Activated CD4-positive, alpha-beta memory T cell treated with anti-CD3 and anti-CD28 coated beads for 36 hours (primary cell): ENCODE measurements at regions of chr2 and their contacts with region 1.

Region 1: GRCh38 chr2:30231212-30231995 is at the start of gene LBH:
- DNase-seq: peak; percentile 94
- H3K4me3 Mint-ChIP-seq: peak within 1 kb of the TSS; percentile 84
- H3K27ac Mint-ChIP-seq: peak within 1 kb of the TSS; percentile 94
- H3K4me1 Mint-ChIP-seq: peaks cover 63% of the 10 kb centered on the region
- H3K27me3 Mint-ChIP-seq: no peaks in the 10 kb centered on the region
- total RNA-seq, gene LBH: 109 to 112 TPM

Region 2: DNA sequence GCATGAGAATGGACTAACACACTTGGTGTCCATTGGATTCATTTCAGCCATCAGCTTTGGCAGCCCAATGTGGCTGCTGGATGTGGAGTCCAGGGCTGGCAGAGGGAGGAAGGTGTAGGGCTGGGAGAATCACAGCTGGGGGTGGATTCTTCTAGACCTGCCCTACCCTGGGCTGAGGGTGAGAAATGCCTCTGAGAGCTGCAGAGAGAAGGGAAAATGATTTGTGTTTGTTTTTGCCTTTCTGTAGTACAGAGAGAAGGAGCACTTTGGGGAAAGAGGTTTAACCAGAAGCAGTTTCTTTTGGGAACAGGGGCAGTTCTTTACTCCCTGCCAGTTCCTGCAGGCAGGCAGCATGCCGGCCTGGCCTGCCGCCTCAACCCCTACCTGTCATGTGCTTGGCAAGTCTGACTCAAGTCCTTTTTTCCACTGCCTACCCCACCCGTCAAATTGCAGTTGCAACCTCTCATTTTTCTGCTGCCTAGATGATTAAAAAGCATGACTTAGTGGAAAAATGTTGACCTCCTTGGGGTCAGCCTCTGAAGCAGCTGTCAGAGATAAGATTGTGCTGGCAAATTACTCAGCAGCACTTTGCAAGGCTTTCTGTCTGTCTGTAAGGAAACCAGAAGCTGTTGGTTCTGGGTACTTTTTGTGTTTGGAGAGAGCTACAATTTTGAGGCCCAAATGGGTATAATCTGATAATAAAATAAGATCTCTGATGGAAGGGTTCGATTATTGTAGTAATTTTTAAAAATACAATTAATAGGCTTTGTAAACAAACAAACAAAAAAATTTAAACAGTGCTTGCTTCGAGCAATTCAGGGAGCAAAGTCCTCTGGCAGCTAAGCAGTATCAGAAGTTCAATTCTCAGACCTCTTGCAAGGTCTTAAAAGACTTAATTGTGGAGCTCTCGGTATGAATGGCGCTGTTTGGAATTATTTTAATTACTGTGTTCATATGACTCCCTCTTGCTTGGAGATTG is 21.6 kb after region 1 on chr2:
- CTCF ChIA-PET with region 1: interaction called, 12 read pairs
- POLR2A ChIA-PET with region 1: interaction called, 19 read pairs
- intact Hi-C with region 1: loop called (anchors 1 kb)
- DNase-seq: peak; percentile 89
- H3K4me3 Mint-ChIP-seq: peak overlapping the region; percentile 33
- H3K27ac Mint-ChIP-seq: peak overlapping the region; percentile 92
- H3K4me1 Mint-ChIP-seq: peaks cover 96% of the 10 kb centered on the region
- H3K27me3 Mint-ChIP-seq: no peaks in the 10 kb centered on the region

Region 3: DNA sequence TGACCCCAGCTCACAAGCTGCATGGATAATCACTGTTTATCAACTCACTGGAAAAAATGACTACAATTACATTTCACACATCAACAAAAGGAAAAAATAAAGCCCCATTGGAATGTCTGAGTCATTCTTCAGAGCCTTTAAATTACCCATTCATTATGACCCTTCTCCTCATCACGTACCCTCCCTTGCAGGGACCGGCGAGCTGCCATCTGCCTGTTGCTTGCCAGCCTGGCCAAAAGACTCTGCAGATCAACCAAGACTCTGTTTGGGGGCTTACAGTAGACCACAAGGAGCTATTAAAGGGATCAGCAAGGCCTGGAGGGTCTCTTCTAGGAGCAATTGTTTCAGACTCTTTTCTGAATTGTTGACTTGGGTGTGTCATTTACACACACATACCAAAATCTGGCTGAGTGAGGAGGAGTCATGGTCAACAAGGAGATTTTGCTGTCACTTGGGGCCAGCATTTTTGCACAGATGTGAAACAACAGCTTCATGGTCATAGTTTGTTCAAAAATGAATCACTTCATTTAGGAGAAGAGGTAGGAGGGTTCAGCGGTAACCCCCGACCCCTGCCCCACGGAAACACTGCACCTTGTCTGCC is 42.0 kb after region 1 on chr2:
- CTCF ChIA-PET with region 1: interaction called, 3 read pairs
- POLR2A ChIA-PET with region 1: interaction called, 114 read pairs
- intact Hi-C with region 1: no loop called
- DNase-seq: peak; percentile 64
- H3K4me3 Mint-ChIP-seq: peak overlapping the region; percentile 43
- H3K27ac Mint-ChIP-seq: peak overlapping the region; percentile 86
- H3K4me1 Mint-ChIP-seq: peaks cover 51% of the 10 kb centered on the region
- H3K27me3 Mint-ChIP-seq: no peaks in the 10 kb centered on the region

Region 4: DNA sequence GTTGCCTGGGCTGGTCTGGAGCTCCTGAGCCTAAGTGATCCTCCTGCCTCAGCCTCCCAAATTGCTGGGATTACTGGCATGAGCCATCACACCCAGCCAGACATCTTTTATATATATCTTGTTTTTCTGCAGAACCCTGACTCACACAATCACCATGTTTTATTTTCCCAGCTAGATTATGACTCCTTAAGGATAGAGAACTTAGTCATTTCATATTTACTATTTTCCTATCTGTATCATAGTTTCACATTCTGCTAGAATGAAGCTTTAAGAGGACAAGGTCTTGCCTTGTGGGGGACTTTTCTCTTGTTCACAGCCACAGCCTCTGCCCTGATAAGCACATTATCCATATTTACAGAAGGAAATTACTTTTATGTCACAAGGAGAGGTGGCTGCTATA is 73.8 kb after region 1 on chr2:
- CTCF ChIA-PET with region 1: interaction called, 3 read pairs
- POLR2A ChIA-PET with region 1: interaction called, 12 read pairs
- intact Hi-C with region 1: no loop called
- DNase-seq: peak; percentile 23
- H3K4me3 Mint-ChIP-seq: no peak overlapping the region
- H3K27ac Mint-ChIP-seq: peak overlapping the region; percentile 73
- H3K4me1 Mint-ChIP-seq: peaks cover 24% of the 10 kb centered on the region
- H3K27me3 Mint-ChIP-seq: no peaks in the 10 kb centered on the region

Region 5: DNA sequence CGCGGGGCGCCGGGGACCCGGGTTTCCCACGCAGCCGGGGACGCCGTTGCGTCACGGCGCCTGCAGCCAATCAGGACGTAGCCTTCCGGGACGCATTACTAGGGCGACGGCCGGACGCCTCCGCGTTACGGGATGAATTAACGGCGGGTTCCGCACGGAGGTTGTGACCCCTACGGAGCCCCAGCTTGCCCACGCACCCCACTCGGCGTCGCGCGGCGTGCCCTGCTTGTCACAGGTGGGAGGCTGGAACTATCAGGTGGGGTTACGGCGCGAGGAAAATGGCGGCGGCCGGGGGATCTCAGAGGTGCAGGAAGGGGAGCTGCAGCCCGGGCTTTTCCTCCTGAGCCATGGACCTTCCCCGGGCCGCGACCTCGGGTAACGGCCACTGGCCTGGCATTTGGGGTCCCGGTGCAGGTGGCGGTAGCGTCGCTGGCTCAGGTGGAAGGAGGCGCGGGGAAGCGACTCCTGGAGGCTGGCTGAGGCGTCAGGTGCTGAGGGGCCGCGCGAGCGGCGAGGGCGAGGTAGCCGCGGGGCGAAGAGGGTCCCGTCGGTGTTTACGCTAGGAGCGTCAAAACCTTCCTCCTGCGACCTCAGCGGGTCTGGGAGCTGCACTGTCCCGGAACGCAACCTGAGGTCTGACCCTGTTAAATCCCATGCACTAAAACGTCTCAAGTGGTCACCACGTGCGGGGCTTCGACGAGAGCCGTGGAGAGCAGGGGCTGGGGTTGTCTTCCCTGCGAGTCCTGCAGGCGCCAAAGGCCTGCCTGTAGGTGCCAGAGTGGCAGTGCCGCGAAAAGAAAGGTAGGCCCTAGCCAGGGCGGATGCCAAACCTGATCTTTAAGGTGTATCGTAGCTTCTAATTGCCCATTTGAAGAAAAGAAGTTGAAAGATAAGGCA is 216.0 kb after region 1 on chr2 and contains the start of gene LCLAT1:
- CTCF ChIA-PET with region 1: interaction called, 5 read pairs
- POLR2A ChIA-PET with region 1: interaction called, 33 read pairs
- intact Hi-C with region 1: loop called (anchors 2 kb)
- DNase-seq: peak; percentile 90
- H3K4me3 Mint-ChIP-seq: peak within 1 kb of the TSS; percentile 88
- H3K27ac Mint-ChIP-seq: peak within 1 kb of the TSS; percentile 95
- H3K4me1 Mint-ChIP-seq: peaks cover 24% of the 10 kb centered on the region
- H3K27me3 Mint-ChIP-seq: no peaks in the 10 kb centered on the region
- total RNA-seq, gene LCLAT1: 21.5 to 24.3 TPM